BJ (cell line): ENCODE measurements at regions of chr1 and their contacts with region 1.

Region 1: DNA sequence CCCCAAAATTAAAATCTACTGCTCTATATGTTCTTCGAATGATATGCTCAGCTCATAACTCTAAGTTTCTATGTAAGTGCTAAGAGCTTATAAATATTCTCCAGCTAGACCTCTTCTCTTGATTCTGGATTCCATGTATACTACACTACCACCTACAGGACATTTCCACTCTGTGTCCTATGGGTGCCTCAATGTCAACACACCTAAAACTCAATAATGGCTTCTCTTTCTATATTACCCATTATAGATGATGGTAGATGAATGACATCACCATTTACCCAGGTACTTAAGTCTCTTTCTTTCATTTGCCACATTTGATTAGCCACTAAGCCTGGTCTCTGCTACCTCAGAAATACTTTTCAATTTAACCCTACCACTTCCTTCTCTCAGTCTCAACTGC is 41.3 kb downstream of the TBX19 start:
- DNase-seq: no peak
- H3K4me3 ChIP-seq: no peak overlapping the region
- H3K27me3 ChIP-seq: no peaks in the 10 kb centered on the region
- CTCF ChIP-seq: peak; percentile 51

Region 2: GRCh38 chr1:168234846-168235547 is 86.9 kb before region 1 on chr1:
- CTCF ChIA-PET with region 1: interaction called, 10 read pairs
- POLR2A ChIA-PET with region 1: no interaction called
- DNase-seq: no peak
- H3K4me3 ChIP-seq: no peak overlapping the region
- H3K27me3 ChIP-seq: no peaks in the 10 kb centered on the region
- CTCF ChIP-seq: peak; percentile 71

Region 3: DNA sequence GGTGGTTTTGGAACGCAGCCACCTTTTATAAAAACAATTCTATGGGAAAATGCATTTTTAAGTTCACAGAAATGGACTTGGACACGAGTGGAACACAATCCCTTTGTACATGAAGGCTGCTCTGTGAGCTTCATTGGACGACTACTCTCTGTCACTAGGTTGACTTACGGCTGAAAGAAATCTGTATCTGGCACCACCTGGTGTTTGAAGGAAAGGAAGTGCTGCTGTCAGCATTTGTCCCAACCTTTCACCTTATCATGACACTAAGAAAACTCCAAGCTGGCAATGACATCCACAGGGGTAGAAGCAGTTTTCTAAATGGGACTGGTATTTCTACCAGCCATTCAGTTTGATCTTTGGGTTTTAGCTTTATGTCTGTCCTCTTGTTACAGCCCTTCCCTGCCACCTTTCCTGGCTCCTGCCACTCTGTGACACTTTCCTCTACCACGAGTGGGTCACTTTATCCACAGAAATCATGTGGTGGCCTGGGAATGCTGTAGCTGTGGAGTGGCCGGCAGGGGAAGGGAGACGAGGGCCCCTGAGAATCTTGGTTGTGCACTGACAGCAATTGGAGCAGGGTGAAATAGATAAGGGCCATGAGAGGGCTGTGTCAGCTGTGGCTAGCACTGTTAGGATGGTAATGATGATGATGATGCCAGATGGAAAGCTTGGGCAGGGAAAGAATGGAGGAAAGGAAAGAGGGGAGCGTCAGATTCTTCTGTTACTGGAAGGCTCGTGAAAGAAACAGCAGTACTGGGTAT is 44.0 kb after region 1 on chr1:
- CTCF ChIA-PET with region 1: no interaction called
- POLR2A ChIA-PET with region 1: no interaction called
- DNase-seq: no peak
- H3K4me3 ChIP-seq: no peak overlapping the region
- H3K27me3 ChIP-seq: peaks cover 2% of the 10 kb centered on the region; the same call in 1 of the 2 replicates
- CTCF ChIP-seq: no peak